ENCODE measurements at regions of chr11 and their contacts with region 1.

Region 1: GRCh38 chr11:100687630-100688395 is 725 bp downstream of the ARHGAP42 start:
- DNase-seq: peak; percentile 75
- ATAC-seq: peak; percentile 74
- H3K4me3 ChIP-seq: peak overlapping the region; percentile 74 to 78
- H3K27ac ChIP-seq: peak overlapping the region; percentile 77
- H3K4me1 ChIP-seq: peaks cover 10 to 54% of the 10 kb centered on the region in 2 experiments; a peak in 3 of 4 replicates
- H3K27me3 ChIP-seq: no peaks in the 10 kb centered on the region
- CTCF ChIP-seq: peak; percentile 35 to 73 (median 62); a peak in 5 of 6 replicates
- POLR2A ChIP-seq: peak; percentile 10
- RAD21 ChIP-seq: peak; percentile 39

Region 2: GRCh38 chr11:100739666-100740065 is 51.9 kb after region 1 on chr11:
- CTCF ChIA-PET with region 1: interaction called, 3 read pairs
- POLR2A ChIA-PET with region 1: no interaction called
- RAD21 ChIA-PET with region 1: no interaction called
- intact Hi-C with region 1: loop called (anchors 5 kb)
- DNase-seq: peak; percentile 61
- ATAC-seq: peak; percentile 82
- H3K4me3 ChIP-seq: peak overlapping the region in 1 of 2 experiments; percentile 30; a peak in 1 of 4 replicates
- H3K27ac ChIP-seq: peak overlapping the region; percentile 14; the same call in 1 of the 2 replicates
- H3K4me1 ChIP-seq: peaks cover 30 to 74% of the 10 kb centered on the region in 2 experiments
- H3K27me3 ChIP-seq: no peaks in the 10 kb centered on the region
- CTCF ChIP-seq: no peak
- POLR2A ChIP-seq: no peak
- RAD21 ChIP-seq: no peak